ENCODE measurements at regions of chr22 and their contacts with region 1.

Region 1: DNA sequence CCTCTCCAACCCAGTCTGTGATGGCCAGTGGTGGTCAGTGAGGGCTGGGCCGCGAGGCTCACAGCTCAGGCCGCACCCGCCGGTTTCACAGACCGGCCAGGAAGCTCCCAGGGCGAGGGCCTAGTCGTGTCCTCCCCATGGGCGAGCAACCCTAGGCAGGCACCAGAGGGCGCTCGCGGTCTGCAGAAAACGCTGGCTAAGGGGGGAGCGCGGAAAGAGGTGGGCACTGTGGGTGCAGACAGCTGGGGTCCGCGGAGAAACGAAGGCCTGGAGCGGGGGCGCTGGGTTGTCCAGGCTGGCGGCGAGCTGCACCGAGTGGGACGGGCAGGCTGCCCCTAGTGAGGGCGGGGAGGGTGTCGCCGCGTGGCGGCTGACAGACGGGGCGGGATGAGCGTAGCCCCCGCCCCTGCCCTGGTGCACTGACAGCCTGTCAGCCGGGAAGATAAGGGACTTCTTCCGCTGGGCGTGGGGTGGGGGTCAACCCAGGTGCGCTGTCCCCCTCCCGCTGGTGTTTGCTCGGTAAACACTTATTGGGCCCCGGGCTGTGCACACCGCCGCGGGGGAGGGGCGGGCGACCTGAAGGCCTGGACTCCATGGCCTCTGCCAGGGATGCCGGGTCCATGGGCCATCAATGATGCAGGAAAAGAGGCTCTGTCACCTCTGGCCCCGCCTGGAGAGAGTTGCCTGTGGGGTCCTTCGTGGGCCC is 7.5 kb downstream of the GP1BB start:
- DNase-seq: peak; percentile 48
- H3K4me3 ChIP-seq: peak overlapping the region; percentile 24 to 48 (median 44)
- H3K27ac ChIP-seq: no peak overlapping the region
- H3K4me1 ChIP-seq: no peaks in the 10 kb centered on the region
- H3K27me3 ChIP-seq: no peaks in the 10 kb centered on the region
- CTCF ChIP-seq: peak; percentile 80 to 96

Region 2: DNA sequence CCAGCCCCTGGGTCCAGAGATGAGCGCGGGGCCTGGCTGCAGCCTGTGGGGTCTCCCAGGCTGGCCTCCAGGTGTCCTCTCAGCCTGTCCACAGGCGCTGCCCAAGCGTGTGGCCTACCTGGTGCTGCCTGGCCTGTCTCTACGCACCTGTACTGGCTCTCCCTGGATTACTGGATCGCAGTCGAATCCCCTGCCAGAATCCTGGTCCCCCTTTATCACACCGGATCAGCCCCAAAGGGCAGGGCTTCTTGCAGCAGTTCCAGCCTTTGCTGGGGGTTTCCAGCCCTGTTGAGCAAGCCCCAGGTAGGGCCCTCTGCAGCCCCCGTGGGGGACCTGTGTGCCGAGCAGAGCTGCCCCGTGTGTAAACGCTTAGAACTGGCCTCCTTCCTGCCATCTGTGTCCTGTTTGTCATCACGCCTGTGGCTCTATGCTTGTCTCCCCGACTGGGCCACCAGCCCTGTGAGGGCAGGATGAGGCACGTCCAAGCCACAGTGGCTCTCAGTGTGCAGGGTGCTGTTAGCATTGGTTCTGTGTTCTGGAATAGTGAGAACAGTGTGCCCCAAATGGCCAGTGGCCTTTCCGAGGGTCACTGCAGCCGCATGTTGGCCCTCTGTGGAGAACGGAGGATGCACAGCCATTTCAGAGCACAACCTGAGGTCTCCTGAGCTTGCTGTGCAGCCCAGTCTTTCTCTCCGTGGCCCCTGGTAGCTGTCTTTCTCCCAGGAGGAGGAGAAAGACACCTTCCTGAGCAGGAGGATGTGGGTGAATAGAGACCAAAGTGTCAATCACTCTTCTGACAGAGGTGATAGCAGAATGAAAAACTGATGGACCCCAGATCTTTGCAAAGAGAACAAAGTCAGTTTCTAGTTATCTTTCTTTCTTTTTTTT is 224.7 kb after region 1 on chr22:
- CTCF ChIA-PET with region 1: interaction called, 3 read pairs
- dilution Hi-C with region 1: no loop called
- in situ Hi-C with region 1: no loop called
- intact Hi-C with region 1: loop called (anchors 2 kb)
- DNase-seq: no peak
- H3K4me3 ChIP-seq: no peak overlapping the region
- H3K27ac ChIP-seq: no peak overlapping the region
- H3K4me1 ChIP-seq: peaks cover 30% of the 10 kb centered on the region
- H3K27me3 ChIP-seq: no peaks in the 10 kb centered on the region
- CTCF ChIP-seq: no peak

Region 3: DNA sequence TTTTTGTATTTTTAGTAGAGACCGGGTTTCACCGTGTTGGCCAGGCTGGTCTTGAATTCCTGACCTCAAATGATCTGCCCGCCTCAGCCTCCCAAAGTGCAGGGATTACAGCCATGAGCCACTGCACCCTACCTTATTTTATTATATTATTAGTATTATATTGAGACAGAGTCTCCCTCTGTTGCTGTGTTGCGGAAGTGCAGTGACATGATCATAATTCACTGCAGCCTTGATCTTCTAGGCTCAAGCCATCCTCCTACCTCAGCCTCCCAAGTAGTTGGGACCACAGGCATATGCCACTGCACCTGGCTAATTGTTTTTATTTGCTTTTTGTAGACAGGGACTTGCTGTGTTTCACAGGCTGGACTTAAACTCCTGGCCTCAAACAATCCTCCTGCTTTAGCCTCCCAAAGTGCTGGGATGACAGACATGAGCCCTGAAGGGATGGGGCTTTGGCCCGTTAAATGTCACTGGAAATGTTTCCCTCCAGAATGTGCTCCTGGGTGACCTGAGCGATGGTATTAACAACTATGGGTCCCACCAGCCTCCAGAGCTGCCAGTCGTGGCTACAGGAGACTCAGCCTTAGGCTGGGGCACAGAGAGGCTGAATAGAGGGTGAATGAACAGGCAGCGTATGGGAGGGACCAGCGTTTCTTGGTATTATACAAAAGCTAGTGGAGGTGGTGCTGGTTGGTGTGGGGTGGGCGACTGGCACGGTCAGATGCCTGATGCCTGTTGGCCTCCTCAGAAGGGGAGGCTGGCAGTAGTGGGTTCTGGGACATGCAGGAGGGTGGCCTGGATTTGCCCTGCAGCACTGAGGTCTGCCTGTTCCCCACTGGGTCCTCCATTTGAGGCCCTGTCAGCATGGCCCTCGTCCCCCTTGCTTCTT is 297.4 kb after region 1 on chr22:
- CTCF ChIA-PET with region 1: no interaction called
- dilution Hi-C with region 1: no loop called
- in situ Hi-C with region 1: no loop called
- intact Hi-C with region 1: loop called (anchors 2 kb)
- DNase-seq: no peak
- H3K4me3 ChIP-seq: no peak overlapping the region
- H3K27ac ChIP-seq: no peak overlapping the region
- H3K4me1 ChIP-seq: peaks cover 6% of the 10 kb centered on the region
- H3K27me3 ChIP-seq: no peaks in the 10 kb centered on the region
- CTCF ChIP-seq: peak; percentile 26 to 49